MCF 10A (cell line): ENCODE measurements at regions of chr7 and their contacts with region 1.

Region 1: DNA sequence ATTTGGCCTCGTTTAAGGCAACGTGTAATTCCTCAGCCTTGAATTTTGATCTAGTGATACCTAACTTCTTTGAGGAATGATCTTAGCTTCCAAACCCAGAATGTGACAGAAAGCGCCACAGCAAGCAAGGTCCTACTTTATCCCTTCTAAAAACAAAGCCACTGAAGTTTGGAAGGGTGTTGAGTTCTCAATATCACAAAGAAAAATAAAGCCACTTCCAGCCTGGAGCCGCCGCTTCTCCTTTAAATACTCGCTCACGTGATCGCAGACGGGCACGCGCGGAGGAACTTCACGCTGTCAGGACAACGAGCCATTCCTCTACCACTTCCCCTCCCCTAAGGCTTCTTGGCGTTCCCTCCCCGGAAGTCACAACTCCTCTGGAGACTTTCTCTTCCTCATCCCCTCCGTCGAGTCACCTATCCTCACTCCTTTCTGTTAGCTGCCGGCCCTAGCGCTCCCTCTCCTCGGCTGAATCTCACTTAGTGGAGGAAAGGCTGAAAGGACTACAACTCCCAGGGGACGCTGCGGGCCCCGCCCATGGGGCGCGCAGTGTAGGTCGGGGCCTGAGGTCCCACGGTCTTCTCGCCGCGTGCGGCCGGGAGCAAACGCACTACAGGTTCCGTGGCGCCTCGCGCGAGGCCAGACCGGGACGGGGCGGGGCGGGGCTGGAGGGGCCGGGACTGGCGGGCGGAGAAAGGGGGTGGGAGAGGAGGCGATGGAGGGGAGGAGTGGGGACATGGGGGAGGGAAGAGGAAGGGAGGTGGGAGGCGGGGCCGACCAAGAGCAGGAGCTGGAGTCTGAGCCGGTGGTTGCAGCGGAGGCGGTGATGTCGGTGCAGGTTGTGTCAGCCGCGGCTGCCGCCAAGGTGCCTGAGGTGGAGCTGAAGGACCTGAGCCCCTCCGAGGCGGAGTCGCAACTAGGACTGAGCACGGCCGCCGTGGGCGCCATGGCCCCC is at the start of gene AHCYL2:
- DNase-seq: peak; percentile 97
- H3K4me3 Mint-ChIP-seq: peak within 1 kb of the TSS; percentile 94
- H3K27ac Mint-ChIP-seq: peak within 1 kb of the TSS; percentile 100
- H3K4me1 Mint-ChIP-seq: peaks cover 11% of the 10 kb centered on the region
- H3K27me3 Mint-ChIP-seq: no peaks in the 10 kb centered on the region
- CTCF ChIP-seq: no peak
- total RNA-seq, gene AHCYL2: 12.8 and 16.4 TPM in 2 replicates

Region 2: GRCh38 chr7:129144095-129144833 is 80.3 kb before region 1 on chr7 and contains the start of gene TSPAN33:
- CTCF ChIA-PET with region 1: no interaction called
- POLR2A ChIA-PET with region 1: no interaction called
- intact Hi-C with region 1: no loop called
- DNase-seq: peak; percentile 75
- H3K4me3 Mint-ChIP-seq: peak within 1 kb of the TSS; percentile 68
- H3K27ac Mint-ChIP-seq: no peak within 1 kb of the TSS
- H3K4me1 Mint-ChIP-seq: peaks cover 7% of the 10 kb centered on the region
- H3K27me3 Mint-ChIP-seq: peaks cover 69% of the 10 kb centered on the region
- CTCF ChIP-seq: no peak
- total RNA-seq, gene TSPAN33: 1.7 TPM in 2 replicates

Region 3: GRCh38 chr7:129188372-129188891 is 36.1 kb before region 1 on chr7 and contains the start of gene SMO:
- CTCF ChIA-PET with region 1: no interaction called
- POLR2A ChIA-PET with region 1: no interaction called
- intact Hi-C with region 1: no loop called
- DNase-seq: no peak
- H3K4me3 Mint-ChIP-seq: no peak within 1 kb of the TSS
- H3K27ac Mint-ChIP-seq: no peak within 1 kb of the TSS
- H3K4me1 Mint-ChIP-seq: no peaks in the 10 kb centered on the region
- H3K27me3 Mint-ChIP-seq: peaks cover 52% of the 10 kb centered on the region
- CTCF ChIP-seq: no peak
- total RNA-seq, gene SMO: not detected in 2 replicates

Region 4: DNA sequence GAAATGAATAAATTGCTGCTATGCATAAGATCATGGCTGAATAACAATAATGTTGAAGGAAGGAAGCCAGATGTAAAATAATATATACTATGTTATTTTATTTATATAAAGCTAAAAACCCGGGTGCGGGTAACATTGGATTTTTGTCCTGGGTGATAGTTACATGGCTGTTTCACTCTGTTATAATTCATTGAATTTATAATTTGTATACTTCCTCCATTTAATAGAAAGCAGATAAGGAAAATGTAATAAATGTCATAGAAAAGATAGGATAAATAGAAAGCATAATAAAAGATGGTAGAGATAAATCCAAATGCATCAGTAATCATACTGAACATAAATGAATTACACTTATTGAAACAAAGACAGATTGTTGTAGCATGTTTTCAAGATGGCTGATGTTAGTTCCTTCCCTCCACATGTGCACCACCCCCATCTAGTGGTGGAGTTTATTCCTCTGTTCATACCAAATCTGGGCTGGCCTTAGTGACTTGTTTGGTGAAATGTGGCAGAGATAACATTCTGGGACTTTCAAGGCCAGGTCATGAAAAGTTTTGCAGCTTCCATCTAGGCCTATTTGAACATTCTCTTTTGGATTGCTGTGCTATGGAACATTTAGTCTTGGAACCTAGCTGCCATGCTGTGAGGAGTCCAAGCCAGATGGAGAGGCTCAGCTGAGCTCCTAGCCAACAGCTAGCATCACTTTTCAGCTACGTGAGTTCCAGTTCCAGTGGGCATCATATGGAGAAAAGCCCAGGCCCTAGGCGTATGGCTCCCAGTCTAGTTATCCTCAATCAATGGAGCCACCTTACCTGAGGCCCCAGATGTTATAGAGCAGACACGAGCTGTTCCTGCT is 47.2 kb after region 1 on chr7:
- CTCF ChIA-PET with region 1: interaction called, 63 read pairs
- POLR2A ChIA-PET with region 1: interaction called, 5 read pairs
- intact Hi-C with region 1: no loop called
- DNase-seq: peak; percentile 66
- H3K4me3 Mint-ChIP-seq: no peak overlapping the region
- H3K27ac Mint-ChIP-seq: no peak overlapping the region
- H3K4me1 Mint-ChIP-seq: peaks cover 5% of the 10 kb centered on the region
- H3K27me3 Mint-ChIP-seq: no peaks in the 10 kb centered on the region
- CTCF ChIP-seq: peak; percentile 52

Region 5: DNA sequence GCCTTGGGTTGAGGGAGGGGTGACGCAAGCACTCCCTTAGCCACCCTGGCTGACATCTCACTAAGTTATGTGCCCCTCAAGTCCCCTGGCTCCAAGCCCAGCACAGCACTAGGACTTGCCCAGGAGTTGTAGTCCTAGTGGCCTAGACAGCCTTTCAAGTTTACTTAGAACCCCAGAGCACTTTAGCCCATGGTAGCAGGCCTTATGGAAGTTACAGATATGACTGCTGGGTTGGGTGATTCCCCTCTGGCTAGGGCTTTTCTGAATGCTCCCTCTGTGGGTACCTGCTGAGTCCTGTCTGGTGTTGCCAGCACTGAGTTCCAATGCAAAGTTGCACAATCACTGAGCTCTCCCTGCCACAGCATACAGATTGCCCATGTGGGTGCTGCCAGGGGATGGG is 83.5 kb after region 1 on chr7:
- CTCF ChIA-PET with region 1: interaction called, 5 read pairs
- POLR2A ChIA-PET with region 1: interaction called, 24 read pairs
- intact Hi-C with region 1: no loop called
- DNase-seq: peak; percentile 90
- H3K4me3 Mint-ChIP-seq: peak overlapping the region; percentile 22
- H3K27ac Mint-ChIP-seq: peak overlapping the region; percentile 92
- H3K4me1 Mint-ChIP-seq: peaks cover 15% of the 10 kb centered on the region
- H3K27me3 Mint-ChIP-seq: no peaks in the 10 kb centered on the region
- CTCF ChIP-seq: no peak